Common myeloid progenitor, CD34-positive (primary cell): ENCODE measurements at regions of chr17 and their contacts with region 1.

Region 1: DNA sequence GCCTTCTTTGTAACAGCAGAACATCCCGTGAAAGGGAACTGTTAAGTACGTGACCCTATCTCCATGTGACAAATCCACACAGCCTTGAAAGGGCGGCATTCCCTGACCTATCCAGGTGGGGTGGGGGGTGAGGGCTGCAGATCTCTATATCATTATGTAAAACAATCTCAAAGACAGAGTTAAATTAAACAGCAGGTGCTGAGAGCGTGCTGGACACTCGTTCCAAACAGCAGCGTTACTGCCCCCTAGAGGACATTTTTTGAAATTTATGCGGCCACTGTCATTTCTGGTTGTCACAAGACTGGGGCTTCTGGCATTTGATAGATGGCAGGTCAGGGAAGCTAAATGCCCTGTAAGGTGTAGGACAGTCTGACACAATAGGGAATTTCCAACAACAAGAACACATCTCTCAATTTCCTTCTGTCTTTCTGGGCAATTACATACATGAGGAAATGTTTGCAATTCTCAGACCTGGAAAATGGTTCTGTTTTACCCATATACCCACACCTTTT is 6.7 kb upstream of the SLC25A39 start:
- DNase-seq: peak; percentile 75 to 83 (median 79)
- H3K4me3 ChIP-seq: peak overlapping the region in 2 of 7 experiments; percentile 24 to 42
- H3K27ac ChIP-seq: no peak overlapping the region
- H3K4me1 ChIP-seq: peaks cover 4 to 12% (median 6%) of the 10 kb centered on the region in 4 experiments
- H3K27me3 ChIP-seq: no peaks in the 10 kb centered on the region

Region 2: GRCh38 chr17:44176257-44176656 is 155.0 kb before region 1 on chr17:
- CTCF ChIA-PET with region 1: no interaction called
- POLR2A ChIA-PET with region 1: interaction called, 10 read pairs
- DNase-seq: no peak
- H3K4me3 ChIP-seq: no peak overlapping the region
- H3K27ac ChIP-seq: no peak overlapping the region
- H3K4me1 ChIP-seq: no peaks in the 10 kb centered on the region
- H3K27me3 ChIP-seq: no peaks in the 10 kb centered on the region

Region 3: GRCh38 chr17:44199553-44200477 is 131.5 kb before region 1 on chr17 and contains the start of gene ATXN7L3:
- CTCF ChIA-PET with region 1: interaction called, 11 read pairs
- POLR2A ChIA-PET with region 1: interaction called, 3 read pairs
- DNase-seq: peak; percentile 98 to 99 (median 99)
- H3K4me3 ChIP-seq: peak within 1 kb of the TSS; percentile 72 to 95 (median 82)
- H3K27ac ChIP-seq: peak within 1 kb of the TSS; percentile 72 to 92
- H3K4me1 ChIP-seq: peaks cover 6 to 49% (median 45%) of the 10 kb centered on the region in 4 experiments
- H3K27me3 ChIP-seq: no peaks in the 10 kb centered on the region

Region 4: GRCh38 chr17:44218344-44219107 is 112.8 kb before region 1 on chr17:
- CTCF ChIA-PET with region 1: interaction called, 67 read pairs
- POLR2A ChIA-PET with region 1: no interaction called
- DNase-seq: peak; percentile 85 to 92 (median 91)
- H3K4me3 ChIP-seq: peak overlapping the region; percentile 74 to 94 (median 83)
- H3K27ac ChIP-seq: peak overlapping the region; percentile 30 to 86
- H3K4me1 ChIP-seq: peaks cover 15 to 41% (median 36%) of the 10 kb centered on the region in 4 experiments
- H3K27me3 ChIP-seq: no peaks in the 10 kb centered on the region

Region 5: DNA sequence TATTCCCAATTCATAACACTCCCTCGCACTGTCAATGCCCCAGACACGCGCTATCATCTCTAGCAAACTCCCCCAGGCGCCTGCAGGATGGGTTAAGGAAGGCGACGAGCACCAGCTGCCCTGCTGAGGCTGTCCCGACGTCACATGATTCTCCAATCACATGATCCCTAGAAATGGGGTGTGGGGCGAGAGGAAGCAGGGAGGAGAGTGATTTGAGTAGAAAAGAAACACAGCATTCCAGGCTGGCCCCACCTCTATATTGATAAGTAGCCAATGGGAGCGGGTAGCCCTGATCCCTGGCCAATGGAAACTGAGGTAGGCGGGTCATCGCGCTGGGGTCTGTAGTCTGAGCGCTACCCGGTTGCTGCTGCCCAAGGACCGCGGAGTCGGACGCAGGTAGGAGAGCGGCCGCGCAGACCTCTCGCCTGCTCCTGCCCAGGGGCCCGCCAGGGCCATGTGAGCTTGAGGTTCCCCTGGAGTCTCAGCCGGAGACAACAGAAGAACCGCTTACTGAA is 13.7 kb after region 1 on chr17 and contains the start of gene GRN:
- CTCF ChIA-PET with region 1: interaction called, 34 read pairs
- POLR2A ChIA-PET with region 1: interaction called, 3 read pairs
- DNase-seq: peak; percentile 90 to 93 (median 93)
- H3K4me3 ChIP-seq: peak within 1 kb of the TSS; percentile 78 to 97 (median 87)
- H3K27ac ChIP-seq: peak within 1 kb of the TSS in 1 of 2 experiments; percentile 75
- H3K4me1 ChIP-seq: peaks cover 5 to 30% (median 22%) of the 10 kb centered on the region in 4 experiments
- H3K27me3 ChIP-seq: peaks cover 0 to 3% (median 0%) of the 10 kb centered on the region in 5 experiments

Region 6: GRCh38 chr17:44350733-44351226 is 19.5 kb after region 1 on chr17:
- CTCF ChIA-PET with region 1: interaction called, 34 read pairs
- POLR2A ChIA-PET with region 1: no interaction called
- DNase-seq: peak; percentile 72 to 81 (median 73)
- H3K4me3 ChIP-seq: no peak overlapping the region
- H3K27ac ChIP-seq: no peak overlapping the region
- H3K4me1 ChIP-seq: peaks cover 5 to 32% (median 24%) of the 10 kb centered on the region in 4 experiments
- H3K27me3 ChIP-seq: peaks cover 0 to 4% (median 0%) of the 10 kb centered on the region in 5 experiments